ENCODE measurements at regions of chr2 and their contacts with region 1.

Region 1: GRCh38 chr2:70142590-70143313 is 48.1 kb downstream of the C2orf42 start:
- DNase-seq: peak; percentile 97 to 100
- H3K4me3 ChIP-seq: peak overlapping the region; percentile 42 to 66
- H3K27ac ChIP-seq: peak overlapping the region; percentile 93 to 98
- H3K4me1 ChIP-seq: peaks cover 5 to 8% of the 10 kb centered on the region in 2 donors
- H3K27me3 ChIP-seq: no peaks in the 10 kb centered on the region
- CTCF ChIP-seq: peak; percentile 90 to 100 (median 94)

Region 2: DNA sequence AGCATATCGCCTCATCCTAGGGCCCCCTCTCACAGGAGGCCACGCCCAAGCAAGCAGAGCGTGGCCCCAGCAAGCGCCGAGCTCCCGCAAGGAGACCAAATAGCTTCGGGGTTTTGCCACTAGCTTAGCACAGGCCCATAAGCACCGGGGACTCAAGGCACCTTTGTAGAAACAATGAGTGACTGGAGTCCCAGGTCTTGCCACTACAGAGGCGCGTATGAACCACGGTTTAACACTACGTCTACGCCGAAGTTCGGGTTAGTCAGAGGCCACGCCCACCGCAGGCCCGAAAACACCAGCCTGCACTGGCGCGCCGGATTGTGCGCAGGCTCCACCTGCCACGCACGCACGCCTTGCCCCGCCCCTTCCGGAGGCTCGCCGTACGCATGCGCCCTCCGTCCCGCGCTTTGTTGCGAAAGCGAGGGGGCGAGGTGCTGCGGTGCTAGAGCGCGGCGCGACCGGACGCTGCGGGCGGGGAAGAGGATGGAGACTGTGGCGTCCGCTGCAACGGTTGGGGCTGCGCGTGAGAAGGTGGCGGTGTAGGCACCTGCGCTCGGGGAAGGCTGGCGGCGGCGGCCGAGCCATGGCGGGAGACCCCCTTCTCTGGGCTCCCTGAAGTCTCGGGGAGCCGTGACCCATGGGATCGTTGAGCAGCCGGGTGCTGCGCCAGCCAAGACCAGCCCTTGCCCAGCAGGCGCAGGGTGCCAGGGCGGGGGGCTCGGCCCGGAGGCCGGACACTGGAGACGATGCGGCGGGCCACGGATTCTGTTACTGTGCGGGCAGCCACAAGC is 313.3 kb before region 1 on chr2 and contains the start of gene GMCL1:
- intact Hi-C with region 1: loop called (anchors 1 kb)
- DNase-seq: peak; percentile 86 to 98
- H3K4me3 ChIP-seq: peak within 1 kb of the TSS; percentile 90 to 91
- H3K27ac ChIP-seq: peak within 1 kb of the TSS; percentile 91 to 94
- H3K4me1 ChIP-seq: peaks cover 0 to 23% of the 10 kb centered on the region in 2 donors
- H3K27me3 ChIP-seq: no peaks in the 10 kb centered on the region
- CTCF ChIP-seq: peak in 1 of 3 experiments; percentile 10
- total RNA-seq, gene GMCL1: 10.4 TPM

Region 3: GRCh38 chr2:70029814-70030409 is 112.8 kb before region 1 on chr2:
- intact Hi-C with region 1: loop called (anchors 5 kb)
- DNase-seq: peak; percentile 51 to 90
- H3K4me3 ChIP-seq: peak overlapping the region in 1 of 2 donors; percentile 12
- H3K27ac ChIP-seq: peak overlapping the region; percentile 85 to 89
- H3K4me1 ChIP-seq: peaks cover 0 to 16% of the 10 kb centered on the region in 2 donors
- H3K27me3 ChIP-seq: no peaks in the 10 kb centered on the region
- CTCF ChIP-seq: no peak

Region 4: GRCh38 chr2:70070541-70071268 is 72.0 kb before region 1 on chr2:
- intact Hi-C with region 1: loop called (anchors 1 kb)
- DNase-seq: peak in 1 of 2 donors; percentile 87
- H3K4me3 ChIP-seq: peak overlapping the region in 1 of 2 donors; percentile 40
- H3K27ac ChIP-seq: peak overlapping the region; percentile 75 to 77
- H3K4me1 ChIP-seq: peaks cover 0 to 16% of the 10 kb centered on the region in 2 donors
- H3K27me3 ChIP-seq: no peaks in the 10 kb centered on the region
- CTCF ChIP-seq: peak; percentile 85 to 92 (median 88)

Region 5: DNA sequence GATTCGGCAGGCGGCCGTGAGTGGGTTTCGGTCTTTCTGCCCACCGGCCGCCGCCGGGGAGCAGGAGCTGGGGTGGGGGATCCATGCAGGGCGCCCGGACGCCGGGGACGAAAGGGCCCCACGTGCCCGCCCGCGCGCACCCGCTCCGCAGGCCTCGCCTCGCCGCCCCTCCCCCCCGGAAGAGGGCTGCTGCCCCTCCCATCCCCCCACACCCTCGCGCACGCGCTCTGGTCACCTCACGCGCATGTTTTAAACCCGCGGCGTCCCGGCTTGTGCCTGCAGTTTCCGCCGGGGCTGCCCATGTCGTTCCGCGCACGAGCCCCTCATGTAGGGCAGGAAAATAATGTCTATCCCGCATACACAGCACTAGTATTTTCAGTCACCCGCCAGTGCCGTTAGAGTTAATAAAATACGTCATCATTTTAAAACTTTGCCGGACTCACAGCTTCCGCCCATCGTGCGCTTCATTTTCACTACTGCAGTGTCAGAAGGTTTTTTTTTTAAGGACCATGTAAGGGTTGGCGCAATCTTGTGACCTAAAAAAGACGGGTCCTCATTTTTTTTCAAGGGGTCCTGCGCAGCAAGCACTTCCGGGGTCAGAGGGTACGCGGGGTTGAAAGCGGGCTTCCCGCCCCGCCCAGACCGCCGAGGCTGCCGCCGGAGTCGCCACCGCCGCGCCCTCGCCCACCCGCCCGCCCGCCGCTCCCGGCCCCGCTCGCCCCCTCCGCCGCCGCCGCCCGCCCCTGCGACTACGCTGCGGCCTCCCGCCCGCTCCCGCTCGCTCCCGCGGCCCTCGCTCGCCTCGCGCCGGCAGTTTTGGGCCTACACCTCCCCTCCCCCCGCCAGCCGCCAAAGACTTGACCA is 55.7 kb before region 1 on chr2 and contains the start of gene PCBP1:
- intact Hi-C with region 1: loop called (anchors 1 kb)
- DNase-seq: peak; percentile 74 to 96
- H3K4me3 ChIP-seq: peak within 1 kb of the TSS; percentile 78 to 91
- H3K27ac ChIP-seq: peak within 1 kb of the TSS; percentile 98 to 99
- H3K4me1 ChIP-seq: peaks cover 5 to 29% of the 10 kb centered on the region in 2 donors
- H3K27me3 ChIP-seq: no peaks in the 10 kb centered on the region
- CTCF ChIP-seq: no peak
- total RNA-seq, gene PCBP1: 227 TPM

Region 6: GRCh38 chr2:70124983-70125480 is 17.7 kb before region 1 on chr2:
- intact Hi-C with region 1: loop called (anchors 1 kb)
- DNase-seq: peak in 1 of 2 donors; percentile 75
- H3K4me3 ChIP-seq: peak overlapping the region; percentile 66 to 67
- H3K27ac ChIP-seq: peak overlapping the region; percentile 96 to 99
- H3K4me1 ChIP-seq: peaks cover 0 to 9% of the 10 kb centered on the region in 2 donors
- H3K27me3 ChIP-seq: no peaks in the 10 kb centered on the region
- CTCF ChIP-seq: no peak

Region 7: GRCh38 chr2:70190418-70191243 is 47.9 kb after region 1 on chr2 and contains the start of gene C2orf42:
- intact Hi-C with region 1: loop called (anchors 1 kb)
- DNase-seq: peak; percentile 85 to 98
- H3K4me3 ChIP-seq: peak within 1 kb of the TSS; percentile 67 to 82
- H3K27ac ChIP-seq: peak within 1 kb of the TSS; percentile 96 to 97
- H3K4me1 ChIP-seq: peaks cover 0 to 4% of the 10 kb centered on the region in 2 donors
- H3K27me3 ChIP-seq: no peaks in the 10 kb centered on the region
- CTCF ChIP-seq: no peak
- total RNA-seq, gene C2orf42: 9.5 TPM

Region 8: GRCh38 chr2:70356941-70357683 is 214.4 kb after region 1 on chr2:
- intact Hi-C with region 1: no loop called
- DNase-seq: no peak
- H3K4me3 ChIP-seq: no peak overlapping the region
- H3K27ac ChIP-seq: no peak overlapping the region
- H3K4me1 ChIP-seq: no peaks in the 10 kb centered on the region
- H3K27me3 ChIP-seq: no peaks in the 10 kb centered on the region
- CTCF ChIP-seq: no peak

Measured in ascending aorta (tissue), 2 donors.